ENCODE measurements at regions of chr2 and their contacts with region 1.

Region 1: GRCh38 chr2:201231781-201232466 is 28.4 kb upstream of the CASP8 start:
- DNase-seq: peak; percentile 97
- ATAC-seq: peak; percentile 32
- H3K4me3 ChIP-seq: no peak overlapping the region
- H3K27ac ChIP-seq: peak overlapping the region; percentile 32
- H3K4me1 ChIP-seq: peaks cover 39% of the 10 kb centered on the region
- H3K27me3 ChIP-seq: no peaks in the 10 kb centered on the region
- CTCF ChIP-seq: peak; percentile 94

Region 2: DNA sequence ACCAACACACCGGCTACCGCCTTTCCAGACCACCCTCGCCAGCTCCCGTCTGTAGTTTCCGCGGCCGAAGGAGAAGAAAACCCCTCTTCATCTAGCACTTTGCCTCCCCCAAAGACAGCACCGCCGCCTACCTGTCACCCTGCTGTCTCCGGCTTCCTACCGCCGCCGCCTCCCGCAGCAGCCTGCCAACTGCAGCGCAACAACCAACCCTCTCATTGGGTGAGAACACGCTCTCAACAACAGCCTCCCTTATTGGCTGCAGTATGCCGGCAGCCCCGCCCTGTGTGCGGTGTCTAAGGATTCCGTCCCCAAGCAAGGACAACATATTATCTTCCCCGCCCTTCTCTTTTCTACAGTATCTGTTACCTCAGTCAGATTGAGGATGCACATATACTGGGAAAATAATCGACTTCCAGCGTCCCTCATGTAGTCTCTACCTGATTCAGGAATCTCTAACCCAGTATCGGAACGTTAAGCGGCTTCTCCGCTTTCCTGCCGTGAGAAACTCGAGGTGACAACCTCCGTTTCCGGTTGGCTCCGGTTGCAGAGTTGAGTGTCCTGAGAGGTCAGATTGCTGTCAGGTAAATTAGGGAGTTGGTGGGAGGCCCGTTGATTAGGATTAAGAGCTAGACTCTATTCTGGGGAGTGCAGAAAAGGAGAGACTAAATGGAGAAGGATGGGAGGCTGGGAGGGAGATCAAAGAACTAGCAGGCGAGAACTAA is 160.3 kb before region 1 on chr2 and contains the starts of genes HYCC2 and NDUFB3:
- CTCF ChIA-PET with region 1: no interaction called
- POLR2A ChIA-PET with region 1: no interaction called
- intact Hi-C with region 1: loop called (anchors 5 kb)
- DNase-seq: peak; percentile 95
- ATAC-seq: peak; percentile 83
- H3K4me3 ChIP-seq: peak within 1 kb of the TSS; percentile 81
- H3K27ac ChIP-seq: peak within 1 kb of the TSS; percentile 84
- H3K4me1 ChIP-seq: peaks cover 24% of the 10 kb centered on the region
- H3K27me3 ChIP-seq: no peaks in the 10 kb centered on the region
- CTCF ChIP-seq: no peak
- total RNA-seq, gene HYCC2: 3.6 and 5.5 TPM in 2 replicates
- total RNA-seq, gene NDUFB3: 154 and 176 TPM in 2 replicates

Region 3: GRCh38 chr2:201182650-201183364 is 49.1 kb before region 1 on chr2 and contains the start of gene CASP10:
- CTCF ChIA-PET with region 1: interaction called, 38 read pairs
- POLR2A ChIA-PET with region 1: interaction called, 7 read pairs
- intact Hi-C with region 1: loop called (anchors 1 kb)
- DNase-seq: peak; percentile 64
- ATAC-seq: peak; percentile 81
- H3K4me3 ChIP-seq: peak within 1 kb of the TSS; percentile 54
- H3K27ac ChIP-seq: no peak within 1 kb of the TSS
- H3K4me1 ChIP-seq: no peaks in the 10 kb centered on the region
- H3K27me3 ChIP-seq: no peaks in the 10 kb centered on the region
- CTCF ChIP-seq: peak; percentile 63
- total RNA-seq, gene CASP10: 1.3 and 4.2 TPM in 2 replicates

Region 4: GRCh38 chr2:201194097-201194496 is 37.8 kb before region 1 on chr2:
- CTCF ChIA-PET with region 1: no interaction called
- POLR2A ChIA-PET with region 1: no interaction called
- intact Hi-C with region 1: no loop called
- DNase-seq: no peak
- ATAC-seq: no peak
- H3K4me3 ChIP-seq: no peak overlapping the region
- H3K27ac ChIP-seq: no peak overlapping the region
- H3K4me1 ChIP-seq: no peaks in the 10 kb centered on the region
- H3K27me3 ChIP-seq: no peaks in the 10 kb centered on the region
- CTCF ChIP-seq: no peak

Region 5: GRCh38 chr2:201357241-201357640 is 125.3 kb after region 1 on chr2 and contains the start of gene FLACC1:
- CTCF ChIA-PET with region 1: no interaction called
- POLR2A ChIA-PET with region 1: no interaction called
- intact Hi-C with region 1: loop called (anchors 1 kb)
- DNase-seq: peak; percentile 45
- ATAC-seq: no peak
- H3K4me3 ChIP-seq: no peak within 1 kb of the TSS
- H3K27ac ChIP-seq: no peak within 1 kb of the TSS
- H3K4me1 ChIP-seq: peaks cover 13% of the 10 kb centered on the region
- H3K27me3 ChIP-seq: no peaks in the 10 kb centered on the region
- CTCF ChIP-seq: no peak
- total RNA-seq, gene FLACC1: 0.26 and 5.9 TPM in 2 replicates

Region 6: DNA sequence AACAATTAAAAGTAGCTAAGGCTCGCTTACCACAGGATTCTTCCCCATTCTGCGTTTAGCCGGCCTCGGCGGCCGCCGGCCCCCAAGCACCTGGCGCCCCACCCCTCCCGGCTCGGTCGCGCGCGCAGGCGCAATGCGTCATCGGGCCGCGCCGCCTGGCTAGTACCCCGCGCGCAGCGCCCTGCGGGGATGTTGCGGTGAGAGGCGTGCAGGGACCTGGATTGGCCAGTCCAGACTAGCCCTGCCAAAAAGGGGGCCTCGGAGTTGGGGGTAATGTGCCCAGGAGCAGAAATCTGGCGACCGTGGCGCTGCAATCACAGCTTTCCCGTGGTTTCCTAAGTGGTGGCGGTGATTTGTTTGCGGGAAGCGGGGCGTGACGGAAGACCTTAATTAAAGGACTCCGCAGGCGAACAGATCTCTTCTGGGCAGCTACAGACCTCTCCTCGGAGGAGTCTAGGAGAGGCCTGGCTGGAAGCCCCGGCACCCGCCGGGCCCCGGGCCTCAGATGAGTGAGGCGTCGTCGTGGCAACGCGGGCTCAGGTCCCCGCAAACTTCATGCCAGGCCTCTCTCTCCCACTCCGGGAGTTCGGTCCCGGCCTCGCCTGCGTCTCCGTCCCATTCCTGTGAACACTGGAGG is 410.8 kb after region 1 on chr2:
- CTCF ChIA-PET with region 1: no interaction called
- POLR2A ChIA-PET with region 1: no interaction called
- intact Hi-C with region 1: loop called (anchors 10 kb)
- DNase-seq: peak; percentile 85
- ATAC-seq: peak; percentile 80
- H3K4me3 ChIP-seq: peak overlapping the region; percentile 82
- H3K27ac ChIP-seq: peak overlapping the region; percentile 51
- H3K4me1 ChIP-seq: peaks cover 6% of the 10 kb centered on the region
- H3K27me3 ChIP-seq: no peaks in the 10 kb centered on the region
- CTCF ChIP-seq: no peak

Measured in PC-3 (cell line).